ENCODE measurements at regions of chr4 and their contacts with region 1.

Region 1: GRCh38 chr4:82423245-82424054 is 6.8 kb downstream of the HNRNPDL start:
- DNase-seq: no peak
- ATAC-seq: peak in 1 of 2 donors; percentile 7

Region 2: DNA sequence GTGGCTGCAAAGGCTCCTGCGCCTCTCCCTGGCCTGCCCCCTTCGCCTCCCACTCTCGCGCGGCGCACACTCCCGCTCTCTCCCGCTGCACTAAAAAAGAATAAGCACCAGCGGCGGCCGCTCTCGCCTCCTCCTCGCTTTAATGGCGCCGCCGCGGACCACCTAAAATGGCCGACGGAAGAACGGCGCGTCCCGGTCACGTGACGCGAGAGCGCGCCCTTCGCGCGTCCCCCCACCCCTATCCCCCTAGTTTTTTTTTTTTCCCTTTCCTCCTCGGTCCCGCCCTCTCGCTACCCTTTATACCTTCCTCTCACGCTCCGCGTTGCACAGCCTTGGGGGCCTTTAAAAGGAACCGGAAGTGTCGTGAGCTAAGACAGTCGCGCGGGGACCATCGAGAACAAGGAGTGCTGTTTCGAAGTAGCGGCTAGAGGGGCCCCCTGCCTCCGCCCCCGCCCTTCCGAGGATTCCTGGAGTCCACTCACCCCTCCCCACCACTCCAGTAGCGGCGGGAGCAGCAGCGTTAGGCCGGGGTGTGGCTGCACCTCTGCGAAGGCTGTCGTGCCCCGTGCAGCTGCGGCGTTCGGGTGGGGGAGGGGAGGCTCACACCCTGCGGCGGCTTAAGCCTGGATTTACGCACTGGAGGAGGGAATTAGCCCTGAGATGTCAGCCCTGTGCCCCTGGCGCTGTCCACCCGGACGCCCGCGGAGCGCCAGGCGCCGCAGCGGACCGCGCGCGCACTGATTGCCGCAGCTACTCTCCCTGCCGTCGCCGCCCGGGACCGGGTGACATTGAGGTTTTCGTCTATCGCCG is 49.4 kb before region 1 on chr4 and contains the start of gene HNRNPD:
- intact Hi-C with region 1: loop called in 1 of 2 experiments (anchors 2 kb)
- DNase-seq: peak; percentile 99
- ATAC-seq: peak; percentile 93 to 94
- total RNA-seq, gene HNRNPD: 106 to 147 TPM

Measured in left cardiac atrium (tissue), 4 donors.